ENCODE measurements at regions of chr1 and their contacts with region 1.

Region 1: DNA sequence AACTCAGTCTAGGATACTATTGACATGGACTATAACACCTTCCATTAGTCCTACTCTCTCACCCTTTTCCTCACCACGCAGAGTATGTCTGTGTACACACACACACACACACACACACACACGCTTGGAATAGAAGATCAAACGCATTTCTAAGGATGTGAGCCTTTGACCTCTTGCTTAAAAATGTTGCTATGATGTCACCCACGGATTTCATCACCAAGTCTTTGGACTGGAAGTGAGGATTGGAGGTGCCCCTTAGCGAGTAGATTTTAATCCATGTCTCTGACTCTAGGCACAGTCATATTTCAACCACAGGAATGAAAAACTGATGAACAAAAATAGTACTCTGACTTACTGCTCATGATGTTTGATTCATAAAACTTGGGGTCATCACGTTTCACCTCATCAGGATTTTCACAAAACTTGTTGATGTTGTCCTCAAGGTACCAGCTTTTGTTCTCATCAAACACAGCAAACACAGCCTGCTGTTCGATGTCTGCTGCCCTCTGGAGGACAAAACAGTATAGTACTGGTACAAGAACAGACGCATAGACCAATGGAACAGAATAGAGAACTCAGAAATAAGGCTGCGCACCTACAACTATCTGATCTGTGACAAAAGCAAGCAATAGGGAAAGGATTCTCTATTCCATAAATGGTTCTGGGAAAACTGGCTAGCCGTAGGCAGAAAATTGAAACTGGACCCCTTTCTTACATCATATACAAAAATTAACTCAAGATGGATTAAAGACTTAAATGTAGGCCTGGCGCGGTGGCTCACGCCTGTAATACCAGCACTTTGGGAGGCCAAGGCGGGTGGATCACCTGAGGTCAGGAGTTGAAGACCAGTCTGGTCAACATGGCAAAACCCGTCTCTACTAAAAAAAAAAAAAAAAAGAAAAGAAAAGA is 39.9 kb downstream of the F5 start:
- DNase-seq: peak; percentile 88
- H3K4me3 Mint-ChIP-seq: no peak overlapping the region
- H3K27ac Mint-ChIP-seq: no peak overlapping the region
- H3K4me1 Mint-ChIP-seq: no peaks in the 10 kb centered on the region
- H3K27me3 Mint-ChIP-seq: peaks cover 8% of the 10 kb centered on the region
- CTCF ChIP-seq: peak; percentile 86

Region 2: DNA sequence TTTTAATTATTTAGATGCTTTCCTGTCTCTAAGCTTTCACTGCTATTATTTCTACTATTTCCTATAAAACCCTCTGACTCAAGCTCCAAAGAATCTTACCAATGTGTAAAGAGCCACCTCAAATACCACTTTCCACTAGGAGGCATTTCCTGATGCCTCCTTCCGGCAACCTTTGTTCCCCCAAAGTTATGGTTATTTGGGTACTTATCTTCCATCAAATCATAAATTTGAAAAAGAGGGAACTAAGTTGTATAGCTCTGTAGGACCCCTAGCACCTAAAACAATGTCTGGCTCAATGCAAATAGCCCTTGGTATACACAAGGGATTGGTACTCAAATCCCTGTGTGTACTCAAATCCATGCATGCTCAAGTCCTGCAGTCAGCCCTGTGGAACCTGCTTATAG is 258.3 kb before region 1 on chr1:
- CTCF ChIA-PET with region 1: no interaction called
- POLR2A ChIA-PET with region 1: no interaction called
- intact Hi-C with region 1: no loop called
- DNase-seq: peak; percentile 18
- H3K4me3 Mint-ChIP-seq: no peak overlapping the region
- H3K27ac Mint-ChIP-seq: no peak overlapping the region
- H3K4me1 Mint-ChIP-seq: peaks cover 17% of the 10 kb centered on the region
- H3K27me3 Mint-ChIP-seq: no peaks in the 10 kb centered on the region
- CTCF ChIP-seq: no peak

Region 3: GRCh38 chr1:169466259-169467230 is 79.8 kb before region 1 on chr1:
- CTCF ChIA-PET with region 1: interaction called, 150 read pairs
- POLR2A ChIA-PET with region 1: interaction called, 5 read pairs
- intact Hi-C with region 1: loop called (anchors 1 kb)
- DNase-seq: peak; percentile 72
- H3K4me3 Mint-ChIP-seq: no peak overlapping the region
- H3K27ac Mint-ChIP-seq: no peak overlapping the region
- H3K4me1 Mint-ChIP-seq: peaks cover 8% of the 10 kb centered on the region
- H3K27me3 Mint-ChIP-seq: no peaks in the 10 kb centered on the region
- CTCF ChIP-seq: peak; percentile 65

Region 4: DNA sequence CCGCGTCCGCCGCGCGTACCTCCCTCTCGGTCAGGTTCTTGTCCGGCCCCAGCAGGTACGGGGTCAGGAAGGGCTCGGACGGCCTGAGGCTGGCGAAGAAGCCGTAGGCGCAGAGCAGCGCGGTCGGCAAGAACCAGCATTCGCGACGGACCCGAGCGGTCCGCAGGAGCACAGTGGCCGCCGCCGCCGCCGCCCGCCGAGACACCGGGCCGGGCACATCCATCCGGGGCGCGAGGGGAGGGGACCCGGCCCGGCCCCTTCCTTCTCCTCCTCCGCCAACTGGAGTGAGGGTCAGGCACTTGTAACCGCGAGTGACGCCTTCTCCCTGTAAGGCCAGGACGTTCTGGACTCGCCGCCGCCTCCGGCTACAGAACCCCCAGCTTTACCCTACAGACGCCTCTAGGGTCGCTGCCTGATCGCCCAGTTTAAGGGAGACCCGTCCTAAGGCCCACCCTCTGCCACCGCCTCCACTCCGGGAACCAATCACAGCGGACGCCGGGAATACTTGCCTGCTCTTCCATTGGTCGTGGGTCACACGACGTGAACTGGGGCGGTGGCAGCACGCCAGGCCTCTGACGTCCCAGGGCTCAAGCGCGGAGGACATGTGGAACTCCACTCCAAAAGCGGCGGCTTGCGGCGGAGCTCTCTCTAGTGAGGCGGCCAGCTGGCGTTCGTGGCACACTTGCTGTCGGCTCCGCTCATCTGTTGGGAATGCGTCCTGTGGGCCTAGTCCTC is 60.6 kb before region 1 on chr1 and contains the start of gene SLC19A2:
- CTCF ChIA-PET with region 1: interaction called, 42 read pairs
- POLR2A ChIA-PET with region 1: interaction called, 21 read pairs
- intact Hi-C with region 1: loop called (anchors 1 kb)
- DNase-seq: peak; percentile 100
- H3K4me3 Mint-ChIP-seq: peak within 1 kb of the TSS; percentile 75
- H3K27ac Mint-ChIP-seq: peak within 1 kb of the TSS; percentile 98
- H3K4me1 Mint-ChIP-seq: peaks cover 46% of the 10 kb centered on the region
- H3K27me3 Mint-ChIP-seq: no peaks in the 10 kb centered on the region
- CTCF ChIP-seq: no peak
- total RNA-seq, gene SLC19A2: 13.9 and 16.7 TPM in 2 replicates

Region 5: DNA sequence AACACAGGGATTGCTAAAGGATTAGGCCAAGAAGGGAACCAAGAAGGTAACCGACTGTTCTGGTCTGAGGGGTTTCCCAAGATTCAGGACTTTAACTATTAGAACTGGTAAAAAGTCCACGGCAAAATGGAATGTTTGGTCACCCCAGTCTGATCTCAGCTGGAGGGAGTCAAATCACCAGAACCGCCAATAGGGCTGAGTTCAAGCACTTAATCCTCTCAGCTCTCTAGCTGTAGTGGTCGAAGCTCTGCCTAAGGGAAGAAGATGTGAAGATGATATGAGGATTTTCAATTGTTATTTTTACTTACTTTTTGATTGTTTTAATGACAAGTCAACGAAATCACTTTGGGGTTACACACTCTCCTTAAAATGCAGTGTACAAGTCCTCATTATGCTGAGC is 10.8 kb after region 1 on chr1:
- CTCF ChIA-PET with region 1: interaction called, 51 read pairs
- POLR2A ChIA-PET with region 1: no interaction called
- intact Hi-C with region 1: no loop called
- DNase-seq: no peak
- H3K4me3 Mint-ChIP-seq: no peak overlapping the region
- H3K27ac Mint-ChIP-seq: no peak overlapping the region
- H3K4me1 Mint-ChIP-seq: no peaks in the 10 kb centered on the region
- H3K27me3 Mint-ChIP-seq: peaks cover 89% of the 10 kb centered on the region
- CTCF ChIP-seq: no peak

Region 6: DNA sequence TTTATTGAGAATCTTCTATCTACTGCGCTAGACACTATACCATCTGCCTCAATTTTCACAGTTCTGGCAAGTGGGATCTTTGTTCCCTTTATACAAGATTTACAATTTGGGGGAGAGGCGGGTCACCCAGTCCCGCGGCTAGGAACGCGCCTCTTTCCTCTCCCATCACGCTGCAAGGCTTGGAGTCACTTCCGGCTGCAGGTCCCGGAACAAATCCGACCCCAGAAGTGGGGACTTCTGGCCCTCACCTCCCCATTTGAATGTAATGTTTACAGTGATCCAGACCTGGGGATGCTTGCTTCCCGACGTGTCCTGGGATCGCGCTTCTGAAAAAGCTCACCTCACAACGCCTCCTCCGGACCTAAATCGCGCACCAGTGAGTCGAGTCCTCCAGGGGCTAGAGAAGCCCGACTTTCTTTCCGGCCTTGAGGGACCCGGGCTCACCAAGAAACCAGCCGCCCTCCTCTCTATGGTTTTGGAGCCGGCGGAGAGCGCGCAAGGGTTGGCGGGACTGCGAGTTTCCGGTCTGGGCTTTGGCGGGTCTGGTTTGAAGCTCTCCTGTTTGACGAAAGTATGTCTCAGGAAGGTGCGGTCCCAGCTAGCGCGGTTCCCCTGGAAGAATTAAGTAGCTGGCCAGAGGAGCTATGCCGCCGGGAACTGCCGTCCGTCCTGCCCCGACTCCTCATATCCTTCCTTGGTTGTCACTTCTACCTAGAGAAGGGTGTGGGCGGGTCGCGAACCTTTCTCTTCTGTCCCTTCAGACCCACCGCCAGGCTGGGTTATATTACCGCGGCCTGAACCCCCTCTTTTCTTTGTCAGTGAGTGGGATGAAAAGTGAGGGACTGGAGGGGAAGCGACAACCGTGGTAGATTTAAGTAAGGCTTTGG is 248.4 kb after region 1 on chr1 and contains the start of gene METTL18:
- CTCF ChIA-PET with region 1: interaction called, 15 read pairs
- POLR2A ChIA-PET with region 1: no interaction called
- intact Hi-C with region 1: no loop called
- DNase-seq: peak; percentile 98
- H3K4me3 Mint-ChIP-seq: peak within 1 kb of the TSS; percentile 100
- H3K27ac Mint-ChIP-seq: peak within 1 kb of the TSS; percentile 99
- H3K4me1 Mint-ChIP-seq: peaks cover 10% of the 10 kb centered on the region
- H3K27me3 Mint-ChIP-seq: no peaks in the 10 kb centered on the region
- CTCF ChIP-seq: peak; percentile 53
- total RNA-seq, gene METTL18: 2.8 and 4.1 TPM in 2 replicates

Measured in MCF 10A (cell line).